Natural killer cell (primary cell): ENCODE measurements at regions of chr17 and their contacts with region 1.

Region 1: GRCh38 chr17:77451245-77451893 is 310.6 kb downstream of the SEC14L1 start:
- DNase-seq: peak; percentile 63 to 86
- ATAC-seq: peak; percentile 61 to 78 (median 72)
- H3K4me3 ChIP-seq: peak overlapping the region; percentile 74
- H3K4me3 Mint-ChIP-seq: peak overlapping the region; percentile 96
- H3K27ac ChIP-seq: peak overlapping the region; percentile 79
- H3K27ac Mint-ChIP-seq: peak overlapping the region; percentile 94
- H3K4me1 ChIP-seq: peaks cover 90% of the 10 kb centered on the region
- H3K4me1 Mint-ChIP-seq: peaks cover 67 to 87% of the 10 kb centered on the region in 2 donors
- H3K27me3 ChIP-seq: no peaks in the 10 kb centered on the region
- H3K27me3 Mint-ChIP-seq: no peaks in the 10 kb centered on the region
- CTCF ChIP-seq: no peak

Region 2: GRCh38 chr17:77465358-77466041 is 14.1 kb after region 1 on chr17:
- intact Hi-C with region 1: loop called (anchors 2 kb)
- DNase-seq: peak; percentile 58 to 91
- ATAC-seq: peak; percentile 82 to 92 (median 89)
- H3K4me3 ChIP-seq: peak overlapping the region; percentile 4
- H3K4me3 Mint-ChIP-seq: peak overlapping the region; percentile 77
- H3K27ac ChIP-seq: peak overlapping the region; percentile 74
- H3K27ac Mint-ChIP-seq: peak overlapping the region; percentile 92 to 97
- H3K4me1 ChIP-seq: peaks cover 98% of the 10 kb centered on the region
- H3K4me1 Mint-ChIP-seq: peaks cover 78 to 93% of the 10 kb centered on the region in 2 donors
- H3K27me3 ChIP-seq: no peaks in the 10 kb centered on the region
- H3K27me3 Mint-ChIP-seq: no peaks in the 10 kb centered on the region
- CTCF ChIP-seq: no peak